ENCODE measurements at regions of chr10 and their contacts with region 1.

Region 1: GRCh38 chr10:50624866-50625692 is 1.3 kb upstream of the SGMS1 start:
- DNase-seq: peak; percentile 93
- ATAC-seq: peak; percentile 52
- H3K4me3 ChIP-seq: peak overlapping the region; percentile 74
- H3K27ac ChIP-seq: peak overlapping the region; percentile 89
- H3K4me1 ChIP-seq: peaks cover 23% of the 10 kb centered on the region
- H3K27me3 ChIP-seq: no peaks in the 10 kb centered on the region
- CTCF ChIP-seq: peak; percentile 80

Region 2: DNA sequence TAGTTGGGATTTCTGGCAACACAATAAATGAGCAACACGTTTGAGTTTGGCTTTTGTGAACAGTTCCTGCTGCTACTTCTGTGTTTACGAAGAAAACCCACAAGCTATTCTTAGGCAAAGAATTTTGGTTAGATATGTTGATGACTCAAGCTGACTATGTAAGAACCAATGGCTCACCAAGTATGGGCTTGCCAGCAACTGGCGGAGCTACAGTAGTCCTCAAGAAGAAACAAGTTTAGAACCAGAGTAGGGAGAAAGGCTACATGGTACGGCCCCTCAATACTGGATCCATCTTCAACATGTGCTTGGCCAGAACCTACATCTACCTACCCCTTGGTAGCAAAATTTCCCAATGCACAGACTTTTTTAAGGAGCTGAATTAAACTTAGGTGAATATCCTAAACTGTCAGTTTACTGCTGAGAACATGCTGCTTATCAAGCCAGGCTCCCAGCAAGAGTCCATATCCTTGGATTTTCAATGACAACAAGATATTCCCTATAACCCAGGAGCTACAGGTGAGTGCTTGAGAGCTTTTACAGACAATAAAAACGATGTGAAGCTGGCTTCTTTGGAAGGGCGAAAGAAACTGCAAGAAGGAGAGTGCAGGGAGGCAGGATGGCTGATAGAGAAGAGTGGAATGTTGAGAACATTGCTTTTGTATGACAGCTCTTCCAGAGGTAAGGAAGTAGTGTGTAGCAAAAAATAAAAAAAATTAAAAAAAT is 299.5 kb before region 1 on chr10:
- CTCF ChIA-PET with region 1: no interaction called
- POLR2A ChIA-PET with region 1: no interaction called
- intact Hi-C with region 1: loop called (anchors 1 kb)
- DNase-seq: peak; percentile 100
- ATAC-seq: peak; percentile 87
- H3K4me3 ChIP-seq: peak overlapping the region; percentile 36
- H3K27ac ChIP-seq: peak overlapping the region; percentile 69
- H3K4me1 ChIP-seq: peaks cover 42% of the 10 kb centered on the region
- H3K27me3 ChIP-seq: no peaks in the 10 kb centered on the region
- CTCF ChIP-seq: no peak

Region 3: DNA sequence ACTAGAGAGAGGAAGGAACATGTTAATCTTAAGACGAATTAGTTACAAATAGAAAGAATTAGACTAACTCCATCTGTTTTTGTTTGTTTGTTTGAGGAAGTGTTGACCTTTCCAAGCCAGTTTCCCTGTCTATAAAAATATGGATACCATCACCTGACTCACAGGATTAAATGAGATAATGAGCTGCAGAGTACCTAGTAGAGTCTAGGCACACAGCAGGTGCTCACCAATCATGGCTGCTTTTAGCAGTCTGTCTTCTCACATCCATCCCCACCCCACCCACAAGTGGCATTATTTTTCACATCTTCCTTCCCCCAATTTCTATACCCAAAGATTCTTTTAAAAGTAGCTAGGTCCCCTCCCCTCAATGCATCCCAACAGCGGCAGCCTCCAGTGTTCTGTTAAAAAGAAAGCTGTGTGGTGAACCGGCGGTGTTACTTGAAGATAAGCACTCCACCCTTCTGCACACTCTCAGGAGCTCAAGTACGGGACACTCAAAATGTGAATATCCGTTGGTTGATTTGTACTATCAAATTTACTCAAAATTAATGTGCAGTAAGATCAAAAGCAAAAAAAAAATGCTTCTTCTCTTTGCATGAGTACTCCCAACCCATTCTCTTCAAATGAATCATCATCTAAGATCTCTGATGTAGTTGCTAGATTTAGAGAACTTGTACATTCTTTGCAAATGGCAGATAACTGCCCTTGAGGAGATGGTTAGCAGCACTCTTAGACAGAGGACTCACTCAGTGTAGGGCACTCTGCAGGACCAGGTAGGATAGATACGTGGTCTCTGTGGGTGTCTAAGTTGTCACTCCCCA is 228.4 kb before region 1 on chr10:
- CTCF ChIA-PET with region 1: no interaction called
- POLR2A ChIA-PET with region 1: no interaction called
- intact Hi-C with region 1: loop called (anchors 2 kb)
- DNase-seq: peak; percentile 73
- ATAC-seq: 0 out of 2 replicates have a peak, but pooled peaks have one; percentile 6
- H3K4me3 ChIP-seq: no peak overlapping the region
- H3K27ac ChIP-seq: 0 out of 2 replicates have a peak overlapping the region, but pooled peaks have one; percentile 81
- H3K4me1 ChIP-seq: peaks cover 56% of the 10 kb centered on the region
- H3K27me3 ChIP-seq: no peaks in the 10 kb centered on the region
- CTCF ChIP-seq: no peak

Region 4: GRCh38 chr10:50470345-50470744 is 154.7 kb before region 1 on chr10:
- CTCF ChIA-PET with region 1: no interaction called
- POLR2A ChIA-PET with region 1: no interaction called
- intact Hi-C with region 1: loop called (anchors 1 kb)
- DNase-seq: peak; percentile 50
- ATAC-seq: peak; percentile 20
- H3K4me3 ChIP-seq: peak overlapping the region; percentile 36
- H3K27ac ChIP-seq: peak overlapping the region; percentile 88
- H3K4me1 ChIP-seq: peaks cover 41% of the 10 kb centered on the region
- H3K27me3 ChIP-seq: no peaks in the 10 kb centered on the region
- CTCF ChIP-seq: no peak

Region 5: DNA sequence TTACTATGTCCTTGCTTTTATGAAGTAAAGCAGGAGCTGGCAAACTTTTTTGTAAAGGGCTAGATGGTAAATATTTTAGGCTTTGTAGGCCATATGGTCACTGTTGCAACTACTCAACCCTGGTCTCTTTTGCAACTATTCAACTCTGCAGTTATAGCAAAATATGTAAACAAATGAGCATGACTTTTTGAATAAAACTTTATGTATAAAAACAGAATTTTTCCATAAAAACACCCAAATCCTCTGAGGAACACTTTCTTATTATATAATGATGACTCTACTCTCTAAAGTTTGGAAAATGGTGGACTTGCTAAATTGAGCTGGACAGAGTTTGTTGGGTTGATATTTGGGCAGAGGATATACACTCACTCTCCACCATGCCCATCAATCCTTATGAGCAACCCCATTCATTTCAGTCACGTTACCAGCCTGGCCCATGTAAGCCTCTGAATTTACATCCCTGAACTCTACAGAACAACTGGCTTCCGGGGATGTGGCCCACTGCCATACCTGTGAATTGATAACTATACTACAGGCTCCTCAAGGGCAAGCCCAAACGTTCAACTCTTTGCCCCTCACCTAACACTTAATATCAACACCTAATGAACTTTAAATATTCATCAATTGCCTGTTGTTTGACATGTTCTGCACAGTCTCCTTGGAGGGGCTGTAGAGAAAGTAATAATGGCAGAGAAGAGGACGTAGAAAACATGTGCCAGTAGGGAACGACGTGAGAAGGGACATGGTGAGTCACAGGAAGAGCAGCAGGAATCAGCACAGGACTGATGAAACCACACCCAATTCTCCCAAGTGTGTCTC is 38.9 kb before region 1 on chr10:
- CTCF ChIA-PET with region 1: no interaction called
- POLR2A ChIA-PET with region 1: no interaction called
- intact Hi-C with region 1: loop called (anchors 1 kb)
- DNase-seq: peak; percentile 92
- ATAC-seq: peak; percentile 97
- H3K4me3 ChIP-seq: no peak overlapping the region
- H3K27ac ChIP-seq: peak overlapping the region; percentile 21
- H3K4me1 ChIP-seq: peaks cover 21% of the 10 kb centered on the region
- H3K27me3 ChIP-seq: no peaks in the 10 kb centered on the region
- CTCF ChIP-seq: no peak

Region 6: DNA sequence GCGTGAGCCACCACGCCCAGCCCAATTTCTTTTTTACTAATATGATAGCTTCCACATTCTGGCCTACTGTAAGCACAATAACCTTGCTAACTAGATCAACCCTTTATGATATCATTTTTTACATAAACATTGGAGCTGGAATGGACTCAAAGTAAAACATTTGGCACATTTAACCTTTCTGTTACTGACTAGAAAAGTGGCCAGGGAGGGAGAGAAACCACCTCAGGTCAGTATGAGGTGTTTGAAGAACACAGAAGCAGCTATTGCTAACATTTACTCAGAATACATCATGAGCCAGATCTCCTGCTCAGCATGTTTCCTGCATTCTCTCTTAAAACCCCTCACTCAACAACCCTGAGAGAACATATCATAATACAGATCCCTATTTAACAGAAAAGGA is 28.6 kb before region 1 on chr10:
- CTCF ChIA-PET with region 1: no interaction called
- POLR2A ChIA-PET with region 1: no interaction called
- intact Hi-C with region 1: no loop called
- DNase-seq: no peak
- ATAC-seq: no peak
- H3K4me3 ChIP-seq: no peak overlapping the region
- H3K27ac ChIP-seq: no peak overlapping the region
- H3K4me1 ChIP-seq: peaks cover 18% of the 10 kb centered on the region
- H3K27me3 ChIP-seq: no peaks in the 10 kb centered on the region
- CTCF ChIP-seq: no peak

Region 7: GRCh38 chr10:50679149-50679548 is 54.1 kb after region 1 on chr10:
- CTCF ChIA-PET with region 1: no interaction called
- POLR2A ChIA-PET with region 1: no interaction called
- intact Hi-C with region 1: no loop called
- DNase-seq: no peak
- ATAC-seq: no peak
- H3K4me3 ChIP-seq: no peak overlapping the region
- H3K27ac ChIP-seq: no peak overlapping the region
- H3K4me1 ChIP-seq: no peaks in the 10 kb centered on the region
- H3K27me3 ChIP-seq: peaks cover 9% of the 10 kb centered on the region; the same call in 1 of the 2 replicates
- CTCF ChIP-seq: no peak

Region 8: DNA sequence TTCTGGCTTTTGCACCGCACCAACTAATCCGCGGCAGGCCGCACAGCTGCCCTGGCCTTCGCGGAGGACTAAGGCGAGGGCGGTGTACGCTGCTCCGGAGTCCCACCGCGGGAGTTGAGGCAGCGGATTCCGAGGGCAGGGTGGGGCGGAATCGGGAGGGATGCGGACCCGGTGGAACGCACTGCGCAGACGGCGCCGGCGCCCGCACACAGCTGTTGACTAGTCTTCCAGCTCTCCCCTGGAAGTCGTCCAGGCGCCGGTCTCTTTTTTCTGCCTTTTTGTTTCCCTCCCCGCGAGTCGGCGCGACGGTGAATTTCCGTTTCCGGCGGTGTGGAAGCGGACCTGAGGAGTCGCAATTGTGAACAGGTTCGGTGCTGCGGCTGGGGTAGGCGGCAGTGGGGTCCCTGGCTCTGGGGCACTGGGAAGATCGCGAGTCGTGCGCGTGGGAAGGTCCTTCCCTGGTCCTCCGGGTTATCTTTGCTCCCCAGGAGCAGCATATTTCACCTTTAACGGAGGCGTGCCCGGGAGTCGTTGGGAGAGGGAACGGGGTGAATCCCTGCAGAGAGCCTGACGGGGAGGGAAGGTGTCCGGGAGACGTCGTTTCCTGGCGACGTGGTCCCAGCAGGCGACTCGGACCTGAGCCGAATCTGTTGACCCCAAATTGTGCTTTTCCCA is 114.7 kb after region 1 on chr10 and contains the start of gene ASAH2B:
- CTCF ChIA-PET with region 1: no interaction called
- POLR2A ChIA-PET with region 1: interaction called, 7 read pairs
- intact Hi-C with region 1: loop called (anchors 1 kb)
- DNase-seq: peak; percentile 98
- ATAC-seq: peak; percentile 86
- H3K4me3 ChIP-seq: peak within 1 kb of the TSS; percentile 81
- H3K27ac ChIP-seq: peak within 1 kb of the TSS; percentile 73
- H3K4me1 ChIP-seq: peaks cover 14% of the 10 kb centered on the region
- H3K27me3 ChIP-seq: peaks cover 17% of the 10 kb centered on the region
- CTCF ChIP-seq: no peak
- total RNA-seq, gene ASAH2B: 19.6 and 21.8 TPM in 2 replicates